Adrenal gland (tissue), 19 donors: ENCODE measurements at regions of chr7 and their contacts with region 1.

Region 1: DNA sequence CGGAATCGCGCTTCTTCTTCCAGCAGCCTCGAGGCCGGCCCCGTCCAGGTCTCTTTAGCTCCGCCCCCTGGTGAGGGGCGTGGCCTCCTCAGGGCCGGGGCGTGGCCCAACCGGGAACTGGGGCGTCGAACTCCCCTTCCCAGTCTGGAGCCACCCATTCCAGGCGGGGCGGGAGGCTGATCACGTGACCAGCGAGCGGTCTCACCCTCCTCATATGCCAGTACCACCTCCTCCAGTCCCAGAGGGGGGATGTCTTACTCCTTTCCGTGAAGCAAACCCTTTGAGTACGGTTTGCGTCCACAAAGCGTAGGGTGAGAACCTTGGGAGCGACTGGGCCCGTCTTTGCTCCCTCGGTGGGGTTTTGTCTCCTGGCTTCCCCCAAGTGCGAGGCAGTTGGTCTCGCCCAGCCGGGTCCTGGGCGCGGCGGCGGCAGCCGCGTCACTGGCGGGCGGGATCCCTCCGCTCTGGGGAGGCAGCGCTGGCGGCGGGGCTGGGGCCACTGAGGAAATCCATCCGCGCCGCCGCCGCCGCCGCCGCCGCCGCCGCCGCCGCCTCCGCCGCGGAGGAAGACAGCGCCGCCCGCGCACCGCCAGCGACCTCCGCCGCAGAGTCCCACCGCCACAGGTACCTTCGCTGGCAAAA is at the start of gene GNB2:
- DNase-seq: peak; percentile 99 to 100 (median 99)
- H3K4me3 ChIP-seq: peak within 1 kb of the TSS; percentile 49 to 94 (median 88)
- H3K27ac ChIP-seq: peak within 1 kb of the TSS; percentile 91 to 99 (median 97)
- H3K4me1 ChIP-seq: peaks cover 0 to 14% of the 10 kb centered on the region in 2 donors
- H3K27me3 ChIP-seq: no peaks in the 10 kb centered on the region
- CTCF ChIP-seq: peak in 1 of 6 experiments; percentile 23
- POLR2A ChIP-seq: peak; percentile 77 to 80
- total RNA-seq, gene GNB2: 54.1 to 365 (median 279) TPM

Region 2: DNA sequence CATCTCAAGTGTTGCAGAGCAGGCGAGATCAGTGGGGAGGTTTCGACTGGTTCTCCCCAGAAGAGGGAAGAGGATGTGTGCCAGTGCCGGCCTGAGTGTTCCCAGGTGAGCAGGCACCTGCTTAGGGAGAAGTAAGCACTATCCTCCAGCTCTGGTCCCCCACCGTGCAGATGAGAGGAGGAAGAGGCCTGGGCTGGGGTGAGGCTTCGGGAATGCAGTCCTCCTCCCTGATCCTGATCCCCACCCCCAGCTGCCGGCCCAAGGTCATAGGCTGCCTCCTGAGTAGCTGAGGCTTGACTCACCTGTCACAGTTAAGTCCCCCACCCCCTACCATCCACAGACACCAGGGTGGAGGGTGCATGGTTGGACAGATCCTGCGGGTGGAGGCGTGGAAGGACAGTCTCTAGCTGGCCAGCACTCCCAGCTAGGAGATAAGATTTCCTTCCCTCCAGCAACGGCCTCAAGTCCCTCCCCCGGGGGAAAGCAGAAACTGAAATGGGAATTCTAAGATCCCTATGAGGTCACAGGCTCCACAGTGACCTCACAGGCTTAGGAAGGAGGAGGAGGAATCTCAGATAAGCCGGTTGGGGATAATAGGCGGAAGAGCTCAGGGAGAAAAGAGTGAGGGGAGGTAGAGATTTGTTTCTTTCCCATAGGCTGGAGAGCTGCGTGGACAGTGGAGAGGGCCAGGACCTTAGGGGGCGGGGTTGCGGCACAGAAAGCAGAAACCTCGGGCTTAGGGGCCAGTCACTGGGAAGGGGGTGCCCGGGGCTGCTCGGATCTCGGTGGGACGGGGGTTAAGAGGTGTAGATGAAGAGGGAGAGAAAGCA is 88.5 kb before region 1 on chr7:
- intact Hi-C with region 1: loop called in 1 of 2 experiments (anchors 5 kb)
- DNase-seq: peak; percentile 73 to 88 (median 83)
- H3K4me3 ChIP-seq: peak overlapping the region; percentile 26 to 88 (median 70)
- H3K27ac ChIP-seq: peak overlapping the region; percentile 68 to 99 (median 93)
- H3K4me1 ChIP-seq: peaks cover 21 to 30% of the 10 kb centered on the region in 2 donors
- H3K27me3 ChIP-seq: no peaks in the 10 kb centered on the region
- CTCF ChIP-seq: no peak
- POLR2A ChIP-seq: peak in 1 of 2 donors; percentile 56

Region 3: DNA sequence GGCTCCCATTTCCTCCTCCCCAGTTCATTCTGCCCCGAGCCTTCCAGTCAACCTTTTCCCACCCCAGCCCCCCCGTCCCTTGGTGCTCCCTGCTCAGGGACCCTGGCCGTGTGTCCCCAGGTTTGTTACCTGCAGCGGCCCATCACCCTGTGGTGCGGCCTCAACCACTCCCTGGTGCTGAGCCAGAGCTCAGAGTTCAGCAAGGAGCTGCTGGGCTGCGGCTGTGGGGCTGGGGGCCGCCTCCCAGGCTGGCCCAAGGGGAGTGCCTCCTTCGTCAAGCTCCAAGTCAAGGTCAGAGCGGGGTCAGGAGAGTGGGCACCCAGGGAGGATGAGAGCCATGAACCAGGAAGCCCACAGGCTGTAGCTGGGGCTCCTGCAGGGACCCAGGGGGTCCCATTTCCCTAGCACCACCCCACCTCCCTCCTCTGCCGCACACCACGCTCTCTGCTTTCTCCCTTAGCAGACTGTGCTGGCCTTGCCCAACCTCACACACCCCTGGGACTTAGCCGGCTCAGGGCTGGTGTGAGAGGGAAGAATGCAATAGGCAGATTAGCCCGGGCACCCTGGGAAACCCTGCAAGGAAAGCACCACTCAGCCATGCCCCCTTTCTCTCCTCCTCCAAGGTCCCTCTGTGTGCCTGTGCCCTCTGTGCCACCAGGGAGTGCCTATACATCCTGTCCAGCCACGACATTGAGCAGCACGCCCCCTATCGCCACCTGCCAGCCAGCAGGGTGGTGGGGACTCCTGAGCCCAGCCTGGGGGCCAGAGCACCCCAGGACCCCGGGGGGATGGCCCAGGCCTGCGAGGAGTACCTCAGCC is 73.3 kb before region 1 on chr7:
- intact Hi-C with region 1: no loop called
- DNase-seq: no peak
- H3K4me3 ChIP-seq: no peak overlapping the region
- H3K27ac ChIP-seq: no peak overlapping the region
- H3K4me1 ChIP-seq: peaks cover 4 to 12% of the 10 kb centered on the region in 2 donors
- H3K27me3 ChIP-seq: no peaks in the 10 kb centered on the region
- CTCF ChIP-seq: no peak
- POLR2A ChIP-seq: no peak

Region 4: GRCh38 chr7:100626530-100627237 is 46.7 kb before region 1 on chr7:
- intact Hi-C with region 1: loop called in 1 of 2 experiments (anchors 5 kb)
- DNase-seq: peak; percentile 88 to 95 (median 90)
- H3K4me3 ChIP-seq: peak overlapping the region in 1 of 4 donors; percentile 21
- H3K27ac ChIP-seq: peak overlapping the region in 3 of 5 donors; percentile 38 to 56 (median 44)
- H3K4me1 ChIP-seq: peaks cover 4 to 5% of the 10 kb centered on the region in 2 donors
- H3K27me3 ChIP-seq: no peaks in the 10 kb centered on the region
- CTCF ChIP-seq: no peak
- POLR2A ChIP-seq: peak in 1 of 2 donors; percentile 25